ENCODE measurements at regions of chr11 and their contacts with region 1.

Region 1: GRCh38 chr11:118878163-118878563 is 5.5 kb upstream of the CXCR5 start:
- DNase-seq: peak in 1 of 2 experiments; percentile 65
- H3K4me3 ChIP-seq: no peak overlapping the region
- H3K27ac ChIP-seq: peak overlapping the region; percentile 57
- H3K4me1 ChIP-seq: peaks cover 14% of the 10 kb centered on the region; the same call in 1 of the 2 replicates
- H3K27me3 ChIP-seq: no peaks in the 10 kb centered on the region
- CTCF ChIP-seq: no peak

Region 2: GRCh38 chr11:118715245-118715831 is 162.8 kb before region 1 on chr11:
- CTCF ChIA-PET with region 1: no interaction called
- POLR2A ChIA-PET with region 1: no interaction called
- intact Hi-C with region 1: no loop called
- DNase-seq: peak in 1 of 2 experiments; percentile 60
- H3K4me3 ChIP-seq: no peak overlapping the region
- H3K27ac ChIP-seq: peak overlapping the region; percentile 15; the same call in 1 of the 2 replicates
- H3K4me1 ChIP-seq: peaks cover 46% of the 10 kb centered on the region
- H3K27me3 ChIP-seq: no peaks in the 10 kb centered on the region
- CTCF ChIP-seq: no peak

Region 3: DNA sequence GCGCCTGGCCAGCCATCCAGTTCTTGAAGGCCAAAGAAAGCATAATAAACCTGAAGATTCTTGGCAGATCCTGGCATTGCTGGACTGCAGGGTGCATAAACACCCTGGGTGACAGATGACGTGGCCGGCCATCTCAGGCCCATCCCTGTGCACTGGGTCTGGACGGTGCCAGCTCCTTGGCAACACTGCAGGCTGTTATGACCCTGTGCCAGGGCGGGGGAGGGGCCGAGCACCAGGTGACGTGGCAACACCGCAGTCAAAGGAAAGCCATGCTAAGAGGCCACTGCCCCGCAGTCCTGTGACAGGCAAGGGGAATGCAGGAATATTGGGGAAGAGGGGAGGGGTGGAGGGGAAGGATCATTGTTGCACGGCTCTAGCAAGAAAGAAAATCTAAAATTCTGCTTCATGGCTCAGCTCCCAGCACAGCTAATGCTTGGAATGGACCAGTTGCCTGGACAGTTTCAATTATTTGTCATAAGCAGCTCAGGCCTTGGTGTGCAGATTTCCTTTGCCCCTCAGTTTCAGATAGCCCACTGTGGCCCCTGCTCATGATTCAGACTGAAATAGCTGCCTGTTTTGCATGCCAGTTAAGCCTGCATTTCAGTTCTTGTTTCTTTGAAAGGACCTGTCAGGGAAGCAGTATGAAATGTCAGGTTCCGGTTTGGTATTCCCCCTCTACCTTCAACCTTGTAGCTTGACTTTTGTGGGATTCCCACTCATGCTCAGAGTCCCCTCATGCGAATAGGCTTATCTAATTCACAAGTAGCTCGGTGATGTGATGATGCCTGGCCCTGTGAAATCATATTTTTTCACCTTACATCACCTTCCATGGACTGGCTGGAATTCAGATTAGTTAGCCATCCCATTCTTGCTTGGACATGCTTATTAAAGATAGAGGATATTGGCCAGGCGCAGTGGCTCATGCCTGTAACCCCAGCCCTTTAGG is 57.5 kb before region 1 on chr11:
- CTCF ChIA-PET with region 1: no interaction called
- POLR2A ChIA-PET with region 1: no interaction called
- intact Hi-C with region 1: no loop called
- DNase-seq: peak in 1 of 2 experiments; percentile 82
- H3K4me3 ChIP-seq: no peak overlapping the region
- H3K27ac ChIP-seq: no peak overlapping the region
- H3K4me1 ChIP-seq: no peaks in the 10 kb centered on the region
- H3K27me3 ChIP-seq: no peaks in the 10 kb centered on the region
- CTCF ChIP-seq: no peak

Region 4: DNA sequence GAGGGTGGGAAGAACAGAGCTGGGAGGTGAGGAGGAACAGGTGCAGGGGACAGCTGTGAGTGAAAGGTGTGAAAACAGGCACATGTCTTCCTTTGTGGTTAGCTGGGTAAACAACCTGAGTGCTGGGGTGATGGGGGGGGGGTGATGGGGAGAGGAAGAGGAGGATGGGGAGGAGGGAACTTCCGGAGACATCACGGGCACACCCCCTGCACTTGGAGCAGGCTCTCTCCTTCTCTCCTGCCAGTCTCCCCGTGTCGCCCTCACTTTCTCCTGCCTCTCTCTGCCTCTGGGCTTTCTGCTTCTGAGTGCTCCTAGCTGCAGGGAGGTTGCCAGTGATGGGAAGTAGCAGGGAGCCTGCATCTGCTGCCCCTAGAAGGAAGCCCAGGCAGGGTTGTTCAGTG is 14.4 kb after region 1 on chr11:
- CTCF ChIA-PET with region 1: no interaction called
- POLR2A ChIA-PET with region 1: interaction called, 35 read pairs
- intact Hi-C with region 1: no loop called
- DNase-seq: peak; percentile 28 to 54
- H3K4me3 ChIP-seq: no peak overlapping the region
- H3K27ac ChIP-seq: no peak overlapping the region
- H3K4me1 ChIP-seq: peaks cover 22% of the 10 kb centered on the region
- H3K27me3 ChIP-seq: no peaks in the 10 kb centered on the region
- CTCF ChIP-seq: no peak

Region 5: GRCh38 chr11:118996926-118997626 is 118.9 kb after region 1 on chr11:
- CTCF ChIA-PET with region 1: no interaction called
- POLR2A ChIA-PET with region 1: no interaction called
- intact Hi-C with region 1: no loop called
- DNase-seq: no peak
- H3K4me3 ChIP-seq: peak overlapping the region; percentile 86
- H3K27ac ChIP-seq: no peak overlapping the region
- H3K4me1 ChIP-seq: peaks cover 33% of the 10 kb centered on the region
- H3K27me3 ChIP-seq: no peaks in the 10 kb centered on the region
- CTCF ChIP-seq: no peak; the same call in 1 of the 2 replicates

Measured in PC-9 (cell line).